Mammary epithelial cell (primary cell): ENCODE measurements at regions of chr1 and their contacts with region 1.

Region 1: DNA sequence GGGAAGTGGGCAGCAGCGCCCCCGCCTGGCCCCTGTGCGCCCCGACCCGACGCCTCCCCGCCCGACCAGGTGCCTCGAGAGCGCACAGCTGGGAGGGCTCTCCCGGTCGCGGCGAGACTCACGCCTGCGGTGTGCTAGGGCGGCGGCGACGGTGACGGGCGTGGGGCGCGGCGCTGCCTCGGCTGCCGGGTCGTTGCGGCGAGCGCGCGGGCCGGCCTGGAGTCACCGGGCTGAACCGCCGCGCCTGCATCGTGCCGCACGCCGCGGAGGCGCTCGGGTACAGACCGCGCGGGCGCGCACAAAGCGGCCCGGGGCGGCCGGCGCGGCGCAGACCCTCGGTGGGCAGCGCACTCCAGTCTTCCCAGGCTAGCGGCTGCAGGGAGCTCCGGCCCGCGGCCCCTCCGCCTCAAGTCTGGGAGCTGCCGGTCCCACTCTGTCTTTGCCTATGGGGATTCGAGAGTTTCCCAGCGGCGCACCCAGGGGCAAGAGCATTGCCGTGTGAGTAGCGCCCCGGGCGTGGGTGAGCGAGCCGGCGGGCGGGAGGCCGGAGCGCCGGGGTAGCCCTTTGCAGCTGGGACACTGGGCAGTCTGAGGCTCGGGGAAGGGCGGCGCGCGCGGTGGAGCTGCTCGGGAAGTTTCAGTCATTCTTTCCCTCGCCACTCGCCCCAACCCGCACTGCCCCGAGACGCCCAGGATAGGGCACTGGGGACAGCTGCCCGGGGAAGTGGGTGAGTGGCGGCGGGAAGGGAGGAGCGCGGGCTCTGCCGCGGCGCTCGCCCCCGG is at the start of gene SLC35F3:
- DNase-seq: peak; percentile 82
- H3K4me3 ChIP-seq: peak within 1 kb of the TSS; percentile 79 to 88 (median 85)
- H3K27ac ChIP-seq: peak within 1 kb of the TSS; percentile 70
- H3K4me1 ChIP-seq: peaks cover 26% of the 10 kb centered on the region
- H3K27me3 ChIP-seq: no peaks in the 10 kb centered on the region
- CTCF ChIP-seq: peak; percentile 43 to 54
- total RNA-seq, gene SLC35F3: 14.6 to 23.3 TPM

Region 2: GRCh38 chr1:233304489-233305102 is 600.2 kb before region 1 on chr1:
- CTCF ChIA-PET with region 1: no interaction called
- dilution Hi-C with region 1: no loop called
- in situ Hi-C with region 1: no loop called
- intact Hi-C with region 1: loop called (anchors 10 kb)
- DNase-seq: peak; percentile 17
- H3K4me3 ChIP-seq: no peak overlapping the region
- H3K27ac ChIP-seq: no peak overlapping the region
- H3K4me1 ChIP-seq: no peaks in the 10 kb centered on the region
- H3K27me3 ChIP-seq: peaks cover 2% of the 10 kb centered on the region
- CTCF ChIP-seq: peak; percentile 77 to 80

Region 3: GRCh38 chr1:233424779-233425178 is 480.0 kb before region 1 on chr1:
- CTCF ChIA-PET with region 1: interaction called, 10 read pairs
- dilution Hi-C with region 1: no loop called
- in situ Hi-C with region 1: no loop called
- intact Hi-C with region 1: no loop called
- DNase-seq: no peak
- H3K4me3 ChIP-seq: no peak overlapping the region
- H3K27ac ChIP-seq: no peak overlapping the region
- H3K4me1 ChIP-seq: no peaks in the 10 kb centered on the region
- H3K27me3 ChIP-seq: peaks cover 7% of the 10 kb centered on the region
- CTCF ChIP-seq: peak; percentile 32 to 52

Region 4: GRCh38 chr1:233518349-233518748 is 386.5 kb before region 1 on chr1:
- CTCF ChIA-PET with region 1: no interaction called
- dilution Hi-C with region 1: no loop called
- in situ Hi-C with region 1: no loop called
- intact Hi-C with region 1: loop called (anchors 1 kb)
- DNase-seq: peak; percentile 54
- H3K4me3 ChIP-seq: no peak overlapping the region
- H3K27ac ChIP-seq: no peak overlapping the region
- H3K4me1 ChIP-seq: peaks cover 22% of the 10 kb centered on the region
- H3K27me3 ChIP-seq: peaks cover 2% of the 10 kb centered on the region
- CTCF ChIP-seq: peak; percentile 67 to 74

Region 5: DNA sequence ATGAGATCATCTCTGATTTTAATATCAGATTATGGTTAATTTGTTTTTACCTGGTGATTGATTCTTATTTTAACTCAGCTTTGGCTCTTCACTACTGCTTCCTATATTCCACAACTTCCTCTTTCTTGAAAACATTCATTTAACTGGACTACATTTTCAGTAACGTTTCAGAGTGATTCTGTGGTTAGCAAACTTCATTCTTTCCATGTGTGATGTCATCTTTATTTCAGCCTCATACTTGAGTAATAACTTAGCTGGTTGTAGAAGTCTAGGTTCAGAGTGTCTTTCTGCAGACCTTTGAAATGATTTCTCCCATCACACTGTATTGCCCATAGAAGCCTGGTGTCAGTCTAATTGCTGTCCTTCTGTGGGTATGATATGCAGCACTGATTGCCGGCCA is 36.4 kb before region 1 on chr1:
- CTCF ChIA-PET with region 1: no interaction called
- dilution Hi-C with region 1: no loop called
- in situ Hi-C with region 1: no loop called
- intact Hi-C with region 1: no loop called
- DNase-seq: peak; percentile 26
- H3K4me3 ChIP-seq: no peak overlapping the region
- H3K27ac ChIP-seq: no peak overlapping the region
- H3K4me1 ChIP-seq: no peaks in the 10 kb centered on the region
- H3K27me3 ChIP-seq: no peaks in the 10 kb centered on the region
- CTCF ChIP-seq: no peak

Region 6: DNA sequence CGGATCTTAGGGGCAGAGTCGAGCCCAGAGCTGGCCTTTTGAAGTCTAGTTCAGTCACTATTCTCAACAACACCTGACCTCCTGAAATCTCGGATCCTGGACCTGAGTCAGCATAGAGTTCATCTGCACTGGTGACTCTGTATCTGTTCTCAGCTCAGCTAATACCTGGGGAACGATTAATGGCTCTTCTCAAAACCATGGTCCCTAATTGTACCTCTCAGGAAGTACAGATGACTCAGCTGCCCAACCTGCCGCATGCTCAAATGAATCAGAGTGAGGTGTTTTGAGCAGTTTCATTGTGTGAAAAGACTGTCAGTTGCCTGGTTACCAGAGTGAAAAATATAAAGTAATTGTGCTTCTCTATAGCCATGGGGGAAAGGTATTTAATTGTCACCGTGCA is 88.8 kb after region 1 on chr1:
- CTCF ChIA-PET with region 1: no interaction called
- dilution Hi-C with region 1: no loop called
- in situ Hi-C with region 1: loop called in 1 of 2 experiments (anchors 5 kb)
- intact Hi-C with region 1: loop called (anchors 2 kb)
- DNase-seq: peak; percentile 98
- H3K4me3 ChIP-seq: no peak overlapping the region
- H3K27ac ChIP-seq: peak overlapping the region; percentile 98
- H3K4me1 ChIP-seq: peaks cover 55% of the 10 kb centered on the region
- H3K27me3 ChIP-seq: no peaks in the 10 kb centered on the region
- CTCF ChIP-seq: no peak

Region 7: GRCh38 chr1:234065794-234066447 is 161.1 kb after region 1 on chr1:
- CTCF ChIA-PET with region 1: interaction called, 10 read pairs
- dilution Hi-C with region 1: no loop called
- in situ Hi-C with region 1: loop called (anchors 5 to 10 kb)
- intact Hi-C with region 1: loop called (anchors 1 kb)
- DNase-seq: peak; percentile 58
- H3K4me3 ChIP-seq: no peak overlapping the region
- H3K27ac ChIP-seq: peak overlapping the region; percentile 18
- H3K4me1 ChIP-seq: peaks cover 10% of the 10 kb centered on the region
- H3K27me3 ChIP-seq: no peaks in the 10 kb centered on the region
- CTCF ChIP-seq: peak; percentile 76 to 90

Region 8: GRCh38 chr1:234102583-234102982 is 197.8 kb after region 1 on chr1:
- CTCF ChIA-PET with region 1: no interaction called
- dilution Hi-C with region 1: no loop called
- in situ Hi-C with region 1: no loop called
- intact Hi-C with region 1: no loop called
- DNase-seq: no peak
- H3K4me3 ChIP-seq: no peak overlapping the region
- H3K27ac ChIP-seq: no peak overlapping the region
- H3K4me1 ChIP-seq: no peaks in the 10 kb centered on the region
- H3K27me3 ChIP-seq: no peaks in the 10 kb centered on the region
- CTCF ChIP-seq: no peak